Activated CD8-positive, alpha-beta T cell treated with anti-CD3 and anti-CD28 coated beads for 36 hours (primary cell): ENCODE measurements at regions of chr6 and their contacts with region 1.

Region 1: DNA sequence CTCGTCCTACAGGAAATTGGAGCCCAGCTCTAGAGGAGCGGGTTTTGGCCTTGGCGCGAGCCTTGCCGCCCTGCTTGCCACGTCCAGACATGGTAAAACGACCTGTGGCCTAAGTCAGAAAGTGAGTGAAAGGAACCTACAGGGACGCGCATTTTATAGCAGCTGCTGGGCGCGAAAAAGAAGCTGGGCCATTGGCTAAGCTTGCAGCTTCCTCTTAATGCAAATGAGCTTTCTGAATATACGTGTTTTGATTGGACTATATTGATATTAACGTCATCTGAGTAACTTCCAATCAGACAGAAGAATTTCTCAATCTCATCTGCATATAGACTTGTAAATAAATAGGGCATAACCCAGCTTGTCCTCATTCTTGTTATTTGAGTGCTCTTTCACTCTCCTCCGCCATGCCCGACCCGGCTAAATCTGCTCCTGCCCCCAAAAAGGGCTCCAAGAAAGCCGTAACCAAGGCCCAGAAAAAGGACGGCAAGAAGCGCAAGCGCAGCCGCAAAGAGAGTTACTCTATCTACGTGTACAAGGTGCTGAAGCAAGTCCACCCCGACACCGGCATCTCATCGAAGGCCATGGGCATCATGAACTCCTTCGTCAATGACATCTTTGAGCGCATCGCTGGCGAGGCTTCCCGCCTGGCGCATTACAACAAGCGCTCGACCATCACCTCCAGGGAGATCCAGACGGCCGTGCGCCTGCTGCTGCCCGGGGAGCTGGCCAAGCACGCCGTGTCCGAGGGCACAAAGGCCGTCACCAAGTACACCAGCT is 18.9 kb downstream of the OR2B2 start:
- DNase-seq: peak; percentile 92
- ATAC-seq: peak; percentile 63
- H3K4me3 Mint-ChIP-seq: no peak overlapping the region
- H3K27ac Mint-ChIP-seq: no peak overlapping the region
- H3K4me1 Mint-ChIP-seq: peaks cover 28% of the 10 kb centered on the region
- H3K27me3 Mint-ChIP-seq: no peaks in the 10 kb centered on the region
- CTCF ChIP-seq: no peak

Region 2: GRCh38 chr6:27157459-27158315 is 735.6 kb before region 1 on chr6:
- CTCF ChIA-PET with region 1: interaction called, 5 read pairs
- POLR2A ChIA-PET with region 1: interaction called, 4 read pairs
- intact Hi-C with region 1: loop called (anchors 10 kb)
- DNase-seq: peak; percentile 92
- ATAC-seq: peak; percentile 80
- H3K4me3 Mint-ChIP-seq: peak overlapping the region; percentile 76
- H3K27ac Mint-ChIP-seq: peak overlapping the region; percentile 77
- H3K4me1 Mint-ChIP-seq: peaks cover 47% of the 10 kb centered on the region
- H3K27me3 Mint-ChIP-seq: no peaks in the 10 kb centered on the region
- CTCF ChIP-seq: peak; percentile 36

Region 3: DNA sequence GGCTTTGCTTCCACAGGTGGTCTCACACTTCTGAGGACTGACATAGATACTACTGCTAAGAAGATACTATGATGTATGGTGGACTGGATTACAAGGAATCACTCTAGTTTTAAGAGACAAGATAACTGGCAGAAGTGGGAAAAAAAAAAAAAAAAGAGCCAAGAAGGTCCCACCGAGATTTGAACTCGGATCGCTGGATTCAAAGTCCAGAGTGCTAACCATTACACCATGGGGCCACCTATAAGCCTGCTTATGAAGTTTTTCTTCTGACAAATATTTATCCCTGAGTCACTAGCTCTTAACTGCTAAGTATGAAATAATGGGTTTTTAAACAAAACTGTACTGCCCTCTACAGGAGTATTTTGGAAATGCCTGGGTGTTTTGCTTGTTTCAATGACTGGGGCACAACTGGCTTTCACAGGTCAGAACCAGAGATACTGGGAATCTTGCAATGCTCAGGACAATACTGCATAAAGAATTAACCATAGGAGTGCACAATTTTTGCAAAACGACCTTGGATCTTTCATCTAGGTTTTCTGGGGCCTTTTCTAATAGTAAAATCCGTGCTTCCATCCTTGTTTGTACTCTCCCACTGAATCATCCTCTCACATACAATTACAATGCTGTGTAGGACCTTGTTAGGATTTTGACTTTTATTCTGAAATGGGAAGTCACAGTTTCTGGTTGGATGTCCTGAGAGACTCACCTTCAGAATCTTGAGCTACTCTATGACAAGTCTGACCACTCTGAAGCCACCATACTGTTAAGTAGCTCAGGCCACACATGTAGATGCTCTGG is 97.4 kb before region 1 on chr6:
- CTCF ChIA-PET with region 1: interaction called, 11 read pairs
- POLR2A ChIA-PET with region 1: interaction called, 6 read pairs
- intact Hi-C with region 1: no loop called
- DNase-seq: peak; percentile 68
- ATAC-seq: peak; percentile 69
- H3K4me3 Mint-ChIP-seq: no peak overlapping the region
- H3K27ac Mint-ChIP-seq: no peak overlapping the region
- H3K4me1 Mint-ChIP-seq: peaks cover 30% of the 10 kb centered on the region
- H3K27me3 Mint-ChIP-seq: peaks cover 10% of the 10 kb centered on the region
- CTCF ChIP-seq: peak; percentile 72

Region 4: GRCh38 chr6:27825025-27825793 is 68.0 kb before region 1 on chr6:
- CTCF ChIA-PET with region 1: interaction called, 74 read pairs
- POLR2A ChIA-PET with region 1: interaction called, 356 read pairs
- intact Hi-C with region 1: no loop called
- DNase-seq: no peak
- ATAC-seq: peak; percentile 1
- H3K4me3 Mint-ChIP-seq: peak overlapping the region; percentile 91
- H3K27ac Mint-ChIP-seq: peak overlapping the region; percentile 99
- H3K4me1 Mint-ChIP-seq: peaks cover 25% of the 10 kb centered on the region
- H3K27me3 Mint-ChIP-seq: no peaks in the 10 kb centered on the region
- CTCF ChIP-seq: no peak

Region 5: GRCh38 chr6:27864906-27865849 is 28.1 kb before region 1 on chr6:
- CTCF ChIA-PET with region 1: interaction called, 157 read pairs
- POLR2A ChIA-PET with region 1: interaction called, 785 read pairs
- intact Hi-C with region 1: no loop called
- DNase-seq: peak; percentile 81
- ATAC-seq: peak; percentile 58
- H3K4me3 Mint-ChIP-seq: peak overlapping the region; percentile 91
- H3K27ac Mint-ChIP-seq: peak overlapping the region; percentile 98
- H3K4me1 Mint-ChIP-seq: peaks cover 27% of the 10 kb centered on the region
- H3K27me3 Mint-ChIP-seq: no peaks in the 10 kb centered on the region
- CTCF ChIP-seq: no peak

Region 6: GRCh38 chr6:27879837-27880236 is 13.4 kb before region 1 on chr6:
- CTCF ChIA-PET with region 1: no interaction called
- POLR2A ChIA-PET with region 1: interaction called, 785 read pairs
- intact Hi-C with region 1: no loop called
- DNase-seq: no peak
- ATAC-seq: no peak
- H3K4me3 Mint-ChIP-seq: no peak overlapping the region
- H3K27ac Mint-ChIP-seq: no peak overlapping the region
- H3K4me1 Mint-ChIP-seq: no peaks in the 10 kb centered on the region
- H3K27me3 Mint-ChIP-seq: no peaks in the 10 kb centered on the region
- CTCF ChIP-seq: no peak

Region 7: DNA sequence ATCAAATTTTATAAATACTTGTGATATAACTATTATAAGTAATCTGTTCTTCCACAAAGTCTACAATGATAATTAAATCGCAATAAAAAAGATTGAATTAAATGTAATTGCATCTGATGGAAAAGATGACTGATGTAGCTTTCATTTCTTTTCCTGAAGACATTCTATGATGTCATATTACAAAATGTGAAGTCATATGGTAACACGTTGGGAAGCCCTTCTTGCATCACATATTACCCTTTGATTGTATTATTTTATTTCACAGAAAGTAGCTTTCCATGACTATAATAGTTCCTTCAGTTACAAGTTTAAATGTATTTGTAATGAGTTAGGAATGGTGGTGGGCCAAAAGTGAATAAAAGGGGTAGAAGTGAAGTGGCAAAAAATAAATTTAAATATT is 38.0 kb after region 1 on chr6:
- CTCF ChIA-PET with region 1: no interaction called
- POLR2A ChIA-PET with region 1: no interaction called
- intact Hi-C with region 1: no loop called
- DNase-seq: no peak
- ATAC-seq: no peak
- H3K4me3 Mint-ChIP-seq: no peak overlapping the region
- H3K27ac Mint-ChIP-seq: no peak overlapping the region
- H3K4me1 Mint-ChIP-seq: no peaks in the 10 kb centered on the region
- H3K27me3 Mint-ChIP-seq: peaks cover 13% of the 10 kb centered on the region
- CTCF ChIP-seq: no peak